WTC11 (cell line): ENCODE measurements at regions of chr11 and their contacts with region 1.

Region 1: DNA sequence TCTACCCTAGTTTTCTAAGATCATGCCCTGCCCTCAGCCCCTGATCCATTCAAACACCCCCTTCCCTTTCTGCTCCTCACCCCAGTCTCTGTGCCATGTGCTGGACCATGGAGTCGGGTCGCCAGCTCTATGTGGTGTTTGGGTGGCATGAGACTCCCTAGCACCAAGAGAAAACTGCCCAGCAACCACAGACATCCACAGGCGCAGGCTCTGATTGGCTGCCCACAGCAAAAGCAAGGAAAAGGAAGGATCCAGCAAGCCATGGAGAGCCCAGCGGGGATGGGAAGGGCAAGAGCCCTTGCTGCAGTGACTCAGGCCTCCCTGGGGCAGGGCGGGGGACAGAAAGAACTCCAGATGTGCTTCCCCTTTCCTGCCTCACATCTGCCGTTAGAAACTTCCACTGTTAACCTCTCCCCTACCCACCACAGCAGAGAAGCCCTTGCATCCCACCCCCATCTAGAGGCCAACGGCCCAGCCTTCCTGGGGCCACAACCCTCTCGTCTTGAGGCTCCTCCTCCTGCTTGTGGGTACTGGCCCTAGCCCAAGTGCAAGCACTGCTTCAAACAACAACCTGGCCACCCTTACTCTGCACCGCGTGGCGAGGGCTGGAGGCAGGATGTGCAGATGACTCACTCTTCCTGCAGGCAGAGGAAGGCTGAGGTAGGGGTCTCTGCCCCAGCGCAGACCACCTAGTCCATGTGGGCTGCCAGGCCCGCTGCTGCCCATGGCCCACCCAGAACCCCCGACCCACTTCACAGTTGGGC is 9.7 kb upstream of the AHNAK start:
- DNase-seq: peak; percentile 82
- ATAC-seq: peak; percentile 33
- H3K4me3 Mint-ChIP-seq: no peak overlapping the region; the same call in 1 of the 2 replicates
- H3K27ac Mint-ChIP-seq: peak overlapping the region; percentile 97
- H3K4me1 Mint-ChIP-seq: peaks cover 85% of the 10 kb centered on the region
- H3K27me3 Mint-ChIP-seq: no peaks in the 10 kb centered on the region; the same call in 1 of the 2 replicates
- CTCF ChIP-seq: no peak

Region 2: GRCh38 chr11:62497132-62497915 is 59.0 kb before region 1 on chr11:
- CTCF ChIA-PET with region 1: interaction called, 19 read pairs
- POLR2A ChIA-PET with region 1: interaction called, 3 read pairs
- DNase-seq: peak; percentile 43
- ATAC-seq: peak; percentile 75
- H3K4me3 Mint-ChIP-seq: no peak overlapping the region
- H3K27ac Mint-ChIP-seq: peak overlapping the region; percentile 19; the same call in 1 of the 2 replicates
- H3K4me1 Mint-ChIP-seq: peaks cover 26% of the 10 kb centered on the region
- H3K27me3 Mint-ChIP-seq: peaks cover 11% of the 10 kb centered on the region
- CTCF ChIP-seq: no peak

Region 3: GRCh38 chr11:62508268-62509058 is 47.8 kb before region 1 on chr11:
- CTCF ChIA-PET with region 1: interaction called, 12 read pairs
- POLR2A ChIA-PET with region 1: interaction called, 3 read pairs
- DNase-seq: peak; percentile 75
- ATAC-seq: peak; percentile 75
- H3K4me3 Mint-ChIP-seq: peak overlapping the region; percentile 32
- H3K27ac Mint-ChIP-seq: peak overlapping the region; percentile 71
- H3K4me1 Mint-ChIP-seq: peaks cover 37% of the 10 kb centered on the region
- H3K27me3 Mint-ChIP-seq: peaks cover 42% of the 10 kb centered on the region
- CTCF ChIP-seq: no peak

Region 4: DNA sequence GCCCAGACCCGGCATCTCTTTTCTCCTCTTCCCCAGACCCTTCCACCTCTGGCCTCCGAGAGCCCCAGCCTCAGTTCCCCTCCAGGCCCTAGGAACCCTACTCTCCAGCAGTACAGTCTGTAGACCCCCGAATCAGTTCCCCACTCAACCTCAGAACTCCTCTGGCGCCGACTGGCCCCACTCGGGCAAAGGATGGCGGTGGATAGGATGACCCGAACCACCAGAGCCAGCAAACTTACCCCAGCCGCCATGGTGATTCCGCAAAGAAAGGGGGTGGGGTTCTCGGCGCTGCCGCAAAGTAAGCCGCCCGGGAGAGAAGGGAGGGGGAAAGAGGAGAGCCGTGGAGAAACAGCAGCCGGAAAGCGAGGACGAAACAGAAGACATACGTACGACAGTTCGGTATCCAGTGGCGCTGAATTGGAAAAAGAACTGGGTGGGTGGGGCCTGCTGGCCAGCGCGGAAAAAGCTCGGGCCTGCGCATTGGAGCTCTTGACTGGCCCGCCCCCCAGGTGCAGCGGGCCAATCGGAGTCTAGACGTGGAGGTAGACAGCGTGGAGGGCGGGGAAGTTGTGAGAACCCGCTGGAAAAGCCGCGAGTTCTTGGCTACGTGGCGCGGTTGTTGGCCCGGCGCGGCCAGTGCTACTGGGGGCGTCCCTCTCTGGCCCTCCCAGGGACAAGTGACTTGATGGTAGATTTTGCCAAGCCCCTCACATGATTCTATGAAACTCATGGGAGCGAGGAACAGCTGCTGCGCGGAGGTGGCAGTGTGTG is 17.5 kb after region 1 on chr11 and contains the start of gene EEF1G:
- CTCF ChIA-PET with region 1: interaction called, 24 read pairs
- POLR2A ChIA-PET with region 1: interaction called, 9 read pairs
- DNase-seq: peak; percentile 98
- ATAC-seq: peak; percentile 97
- H3K4me3 Mint-ChIP-seq: peak within 1 kb of the TSS; percentile 99
- H3K27ac Mint-ChIP-seq: peak within 1 kb of the TSS; percentile 96
- H3K4me1 Mint-ChIP-seq: peaks cover 37% of the 10 kb centered on the region
- H3K27me3 Mint-ChIP-seq: no peaks in the 10 kb centered on the region
- CTCF ChIP-seq: no peak
- total RNA-seq, gene EEF1G: 1,667 to 1,857 TPM (median 1,846 TPM) in 3 replicates

Region 5: DNA sequence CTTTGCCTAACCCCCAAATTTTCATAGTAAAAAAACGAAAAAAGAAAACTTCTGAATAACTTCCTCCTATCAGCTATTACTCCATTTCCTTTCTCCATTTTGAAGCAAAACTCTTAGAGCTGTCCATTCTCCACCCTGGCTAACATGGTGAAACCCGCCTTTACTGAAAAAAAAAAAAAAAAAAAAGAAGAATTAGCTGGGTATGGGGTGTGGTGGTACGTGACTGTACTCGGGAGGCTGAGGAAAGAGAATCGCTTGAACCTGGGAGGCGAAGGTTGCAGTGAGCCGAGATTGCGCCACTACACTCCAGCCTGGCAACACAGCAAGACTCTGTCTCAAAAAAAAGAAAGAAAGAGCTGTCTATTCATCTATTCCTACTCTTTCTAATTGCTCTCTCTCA is 260.3 kb after region 1 on chr11:
- CTCF ChIA-PET with region 1: no interaction called
- POLR2A ChIA-PET with region 1: no interaction called
- DNase-seq: no peak
- ATAC-seq: no peak
- H3K4me3 Mint-ChIP-seq: no peak overlapping the region
- H3K27ac Mint-ChIP-seq: no peak overlapping the region
- H3K4me1 Mint-ChIP-seq: no peaks in the 10 kb centered on the region
- H3K27me3 Mint-ChIP-seq: no peaks in the 10 kb centered on the region
- CTCF ChIP-seq: no peak